Activated CD4-positive, alpha-beta T cell treated with anti-CD3 and anti-CD28 coated beads for 36 hours (primary cell): ENCODE measurements at regions of chr2 and their contacts with region 1.

Region 1: GRCh38 chr2:200483729-200484198 is 26.1 kb downstream of the KCTD18 start:
- DNase-seq: peak; percentile 72
- ATAC-seq: peak; percentile 69
- H3K4me3 Mint-ChIP-seq: no peak overlapping the region
- H3K27ac Mint-ChIP-seq: no peak overlapping the region
- H3K4me1 Mint-ChIP-seq: peaks cover 5% of the 10 kb centered on the region
- H3K27me3 Mint-ChIP-seq: no peaks in the 10 kb centered on the region

Region 2: DNA sequence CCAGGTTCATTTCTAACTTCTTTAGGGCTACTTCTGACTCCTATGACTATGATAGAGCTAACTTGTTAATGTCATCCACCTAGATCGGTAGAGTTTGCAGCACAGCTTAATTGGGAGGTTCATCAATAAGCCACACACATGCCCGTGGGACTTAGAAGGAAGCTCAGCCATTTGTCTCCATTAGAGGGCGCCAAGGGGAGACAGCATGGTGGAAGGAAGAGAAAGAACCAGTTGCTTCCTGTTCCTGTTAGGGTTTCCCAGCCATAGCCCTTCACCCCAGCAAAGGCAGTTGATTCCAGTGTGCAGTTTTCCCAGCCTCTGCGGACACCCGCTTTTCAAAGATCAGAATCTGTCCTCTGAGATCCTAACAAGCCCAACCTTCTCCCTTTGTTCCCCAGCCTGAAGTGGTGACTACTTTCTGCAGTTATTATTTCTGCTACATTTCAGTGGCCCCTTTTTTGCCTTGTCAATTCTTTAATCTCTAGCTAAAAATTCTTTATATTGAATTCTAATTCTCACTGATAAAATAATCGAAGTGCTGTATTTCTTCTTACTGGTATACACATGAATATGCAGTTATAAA is 498.0 kb before region 1 on chr2:
- CTCF ChIA-PET with region 1: interaction called, 44 read pairs
- POLR2A ChIA-PET with region 1: no interaction called
- intact Hi-C with region 1: loop called (anchors 1 kb)
- DNase-seq: peak; percentile 78
- ATAC-seq: peak; percentile 95
- H3K4me3 Mint-ChIP-seq: no peak overlapping the region
- H3K27ac Mint-ChIP-seq: no peak overlapping the region
- H3K4me1 Mint-ChIP-seq: peaks cover 5% of the 10 kb centered on the region
- H3K27me3 Mint-ChIP-seq: no peaks in the 10 kb centered on the region

Region 3: GRCh38 chr2:200385063-200385635 is 98.6 kb before region 1 on chr2:
- CTCF ChIA-PET with region 1: no interaction called
- POLR2A ChIA-PET with region 1: no interaction called
- intact Hi-C with region 1: no loop called
- DNase-seq: no peak
- ATAC-seq: no peak
- H3K4me3 Mint-ChIP-seq: no peak overlapping the region
- H3K27ac Mint-ChIP-seq: no peak overlapping the region
- H3K4me1 Mint-ChIP-seq: peaks cover 23% of the 10 kb centered on the region
- H3K27me3 Mint-ChIP-seq: no peaks in the 10 kb centered on the region

Region 4: DNA sequence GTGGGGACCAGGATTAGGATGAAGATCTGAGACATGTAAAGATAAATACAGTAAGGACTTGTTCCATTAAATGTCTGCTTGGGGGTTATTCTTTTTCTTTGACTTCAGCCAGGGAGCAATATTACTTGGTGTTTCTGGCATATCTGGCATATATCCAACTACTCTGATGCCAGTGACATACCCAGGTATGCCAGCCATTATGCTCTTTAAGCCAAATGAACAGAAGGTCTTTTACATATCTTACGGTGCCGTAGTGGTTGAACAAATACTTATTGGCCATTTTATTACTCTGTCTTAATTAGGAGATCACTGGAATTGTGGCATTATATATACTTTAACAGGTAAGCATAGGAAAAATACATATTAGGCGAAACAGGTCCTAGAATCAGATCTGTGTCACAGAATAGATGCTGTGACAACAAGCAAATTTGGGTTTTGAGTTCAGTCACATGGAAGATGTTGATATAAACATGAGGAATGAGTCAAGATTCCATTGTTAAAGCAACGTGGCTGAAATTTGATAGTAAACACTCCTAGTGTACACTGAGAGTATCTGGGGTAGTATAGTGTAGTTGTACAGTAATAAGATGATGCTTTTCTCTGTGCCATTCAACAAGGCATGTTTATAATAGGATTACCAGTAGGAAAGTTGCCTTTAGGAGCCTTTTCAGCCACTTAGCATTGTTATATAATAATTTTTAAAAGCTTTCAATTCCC is 36.5 kb before region 1 on chr2:
- CTCF ChIA-PET with region 1: no interaction called
- POLR2A ChIA-PET with region 1: no interaction called
- intact Hi-C with region 1: no loop called
- DNase-seq: no peak
- ATAC-seq: peak; percentile 73
- H3K4me3 Mint-ChIP-seq: peak overlapping the region; percentile 1
- H3K27ac Mint-ChIP-seq: peak overlapping the region; percentile 59
- H3K4me1 Mint-ChIP-seq: peaks cover 26% of the 10 kb centered on the region
- H3K27me3 Mint-ChIP-seq: no peaks in the 10 kb centered on the region

Region 5: GRCh38 chr2:200498402-200499162 is 14.8 kb after region 1 on chr2:
- CTCF ChIA-PET with region 1: interaction called, 14 read pairs
- POLR2A ChIA-PET with region 1: no interaction called
- intact Hi-C with region 1: no loop called
- DNase-seq: no peak
- ATAC-seq: no peak
- H3K4me3 Mint-ChIP-seq: no peak overlapping the region
- H3K27ac Mint-ChIP-seq: no peak overlapping the region
- H3K4me1 Mint-ChIP-seq: peaks cover 2% of the 10 kb centered on the region
- H3K27me3 Mint-ChIP-seq: no peaks in the 10 kb centered on the region

Region 6: DNA sequence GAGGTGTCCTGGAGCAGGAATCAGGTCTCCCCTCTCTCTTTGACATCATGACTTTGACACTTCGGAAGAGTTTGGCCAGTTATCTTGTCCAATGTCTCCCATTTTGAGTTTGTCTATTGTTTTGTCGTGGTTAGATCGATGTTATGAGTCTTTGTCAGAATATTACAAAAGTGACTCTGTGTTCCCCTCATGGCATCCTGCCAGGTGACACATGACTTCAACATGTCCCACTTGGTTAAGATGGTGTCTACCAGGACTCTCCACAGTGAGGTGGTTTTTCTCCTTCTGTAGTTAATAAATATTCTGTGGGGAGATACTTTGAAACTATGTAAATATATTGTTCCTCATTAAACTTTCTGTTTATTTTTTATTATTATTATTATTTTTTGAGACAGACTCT is 251.3 kb after region 1 on chr2:
- CTCF ChIA-PET with region 1: interaction called, 3 read pairs
- POLR2A ChIA-PET with region 1: no interaction called
- intact Hi-C with region 1: loop called in 1 of 2 experiments (anchors 5 kb)
- DNase-seq: peak; percentile 66
- ATAC-seq: peak; percentile 49
- H3K4me3 Mint-ChIP-seq: no peak overlapping the region
- H3K27ac Mint-ChIP-seq: peak overlapping the region; percentile 70
- H3K4me1 Mint-ChIP-seq: peaks cover 13% of the 10 kb centered on the region
- H3K27me3 Mint-ChIP-seq: peaks cover 14% of the 10 kb centered on the region